PC-9 (cell line): ENCODE measurements at regions of chr1 and their contacts with region 1.

Region 1: GRCh38 chr1:40143891-40144575 is 17.2 kb upstream of the RLF start:
- DNase-seq: peak; percentile 67 to 73
- H3K4me3 ChIP-seq: no peak overlapping the region
- H3K27ac ChIP-seq: no peak overlapping the region
- H3K4me1 ChIP-seq: peaks cover 55% of the 10 kb centered on the region
- H3K27me3 ChIP-seq: no peaks in the 10 kb centered on the region
- CTCF ChIP-seq: peak; percentile 84

Region 2: GRCh38 chr1:40107290-40108262 is 36.5 kb before region 1 on chr1:
- CTCF ChIA-PET with region 1: interaction called, 13 read pairs
- POLR2A ChIA-PET with region 1: no interaction called
- intact Hi-C with region 1: loop called (anchors 1 kb)
- DNase-seq: peak; percentile 79 to 99
- H3K4me3 ChIP-seq: peak overlapping the region; percentile 34; the same call in 1 of the 2 replicates
- H3K27ac ChIP-seq: peak overlapping the region; percentile 87
- H3K4me1 ChIP-seq: peaks cover 64% of the 10 kb centered on the region
- H3K27me3 ChIP-seq: no peaks in the 10 kb centered on the region
- CTCF ChIP-seq: no peak

Region 3: GRCh38 chr1:40185951-40186864 is 42.2 kb after region 1 on chr1:
- CTCF ChIA-PET with region 1: no interaction called
- POLR2A ChIA-PET with region 1: no interaction called
- intact Hi-C with region 1: no loop called
- DNase-seq: no peak
- H3K4me3 ChIP-seq: no peak overlapping the region
- H3K27ac ChIP-seq: no peak overlapping the region
- H3K4me1 ChIP-seq: no peaks in the 10 kb centered on the region
- H3K27me3 ChIP-seq: no peaks in the 10 kb centered on the region
- CTCF ChIP-seq: no peak

Region 4: DNA sequence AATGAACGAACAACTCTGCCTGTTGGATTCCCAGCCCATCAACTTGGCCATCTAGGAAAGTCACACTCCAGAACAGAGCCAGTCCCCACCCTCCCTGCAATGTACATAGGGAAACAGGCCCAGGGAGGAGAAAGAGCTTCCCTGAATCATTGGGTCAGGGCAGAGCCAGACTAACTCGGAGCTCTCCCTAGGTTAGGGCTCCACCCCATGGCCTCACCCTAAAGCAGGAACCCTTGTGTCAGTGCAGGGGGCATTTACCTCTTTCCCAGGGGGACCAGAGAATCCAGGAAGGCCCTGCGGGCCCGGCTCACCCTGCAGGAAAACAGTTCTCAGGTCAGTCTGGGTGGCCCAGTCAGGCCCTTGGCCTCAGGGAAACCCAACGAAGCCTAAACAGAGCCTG is 161.4 kb after region 1 on chr1:
- CTCF ChIA-PET with region 1: interaction called, 18 read pairs
- POLR2A ChIA-PET with region 1: interaction called, 10 read pairs
- intact Hi-C with region 1: no loop called
- DNase-seq: peak; percentile 61 to 78
- H3K4me3 ChIP-seq: peak overlapping the region; percentile 25; the same call in 1 of the 2 replicates
- H3K27ac ChIP-seq: peak overlapping the region; percentile 88
- H3K4me1 ChIP-seq: peaks cover 30% of the 10 kb centered on the region
- H3K27me3 ChIP-seq: no peaks in the 10 kb centered on the region
- CTCF ChIP-seq: peak; percentile 55

Region 5: GRCh38 chr1:40338745-40339424 is 194.9 kb after region 1 on chr1:
- CTCF ChIA-PET with region 1: interaction called, 29 read pairs
- POLR2A ChIA-PET with region 1: no interaction called
- intact Hi-C with region 1: loop called (anchors 1 kb)
- DNase-seq: peak; percentile 71 to 93
- H3K4me3 ChIP-seq: no peak overlapping the region; the same call in 1 of the 2 replicates
- H3K27ac ChIP-seq: no peak overlapping the region
- H3K4me1 ChIP-seq: peaks cover 10% of the 10 kb centered on the region
- H3K27me3 ChIP-seq: no peaks in the 10 kb centered on the region
- CTCF ChIP-seq: peak; percentile 98

Region 6: DNA sequence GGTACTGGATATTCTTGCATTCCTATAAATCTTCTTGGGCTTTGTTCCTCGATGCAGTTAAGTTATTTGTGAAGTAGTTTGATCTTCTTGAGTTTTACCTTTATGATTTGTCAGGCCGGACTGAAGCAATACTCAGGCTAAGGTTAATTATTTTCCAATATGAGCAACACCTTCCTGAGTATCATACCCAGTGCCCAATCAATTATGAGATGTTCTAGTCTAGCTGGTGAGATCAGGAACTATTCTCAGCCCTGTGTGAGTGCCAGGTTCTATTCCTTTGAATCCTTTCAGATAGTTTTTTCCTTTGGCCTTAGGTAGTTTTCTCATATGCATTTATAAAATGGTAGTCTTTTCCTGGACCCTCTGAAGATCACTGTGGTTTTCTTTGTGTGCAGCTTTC is 1005.5 kb after region 1 on chr1:
- CTCF ChIA-PET with region 1: no interaction called
- POLR2A ChIA-PET with region 1: no interaction called
- intact Hi-C with region 1: no loop called
- DNase-seq: no peak
- H3K4me3 ChIP-seq: no peak overlapping the region
- H3K27ac ChIP-seq: no peak overlapping the region
- H3K4me1 ChIP-seq: peaks cover 12% of the 10 kb centered on the region
- H3K27me3 ChIP-seq: no peaks in the 10 kb centered on the region
- CTCF ChIP-seq: no peak